Endothelial cell of umbilical vein (primary cell): ENCODE measurements at regions of chr13 and their contacts with region 1.

Region 1: DNA sequence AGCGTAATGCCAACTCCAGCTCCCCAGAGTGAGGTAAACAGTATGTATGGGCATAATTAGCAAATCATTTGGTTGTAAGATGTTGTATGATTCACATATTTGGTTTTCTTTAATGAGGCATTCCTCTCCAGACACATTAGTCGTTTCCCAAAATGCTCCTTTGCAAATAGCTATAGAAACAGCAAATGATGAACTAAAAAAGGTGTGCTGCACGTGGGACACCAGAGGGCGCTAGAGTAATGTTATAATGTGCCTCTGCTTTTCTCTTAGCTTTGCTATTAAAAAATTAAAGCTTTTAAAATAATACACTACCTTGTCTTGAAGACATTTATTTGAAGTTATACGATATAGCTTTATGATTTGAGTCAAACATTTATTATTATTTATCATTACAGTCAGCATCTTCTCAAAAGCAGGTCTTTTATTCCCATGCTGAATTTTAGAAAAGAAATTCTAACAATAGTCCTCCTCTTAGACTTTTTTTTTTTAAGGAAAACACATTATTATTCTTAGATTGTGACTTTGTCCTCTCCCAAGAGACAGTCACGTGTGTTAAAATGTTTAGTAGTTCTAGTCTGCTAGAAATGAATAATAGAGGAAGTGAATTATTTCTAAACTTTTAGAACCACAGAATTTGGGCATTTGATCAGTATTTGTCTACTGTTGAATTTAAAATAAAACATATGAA is 121.6 kb upstream of the FRY start:
- DNase-seq: peak; percentile 68
- H3K4me3 ChIP-seq: no peak overlapping the region
- H3K27ac ChIP-seq: no peak overlapping the region
- H3K4me1 ChIP-seq: no peaks in the 10 kb centered on the region
- H3K27me3 ChIP-seq: peaks cover 6 to 9% of the 10 kb centered on the region in 2 experiments
- CTCF ChIP-seq: peak; percentile 72 to 75
- POLR2A ChIP-seq: no peak

Region 2: DNA sequence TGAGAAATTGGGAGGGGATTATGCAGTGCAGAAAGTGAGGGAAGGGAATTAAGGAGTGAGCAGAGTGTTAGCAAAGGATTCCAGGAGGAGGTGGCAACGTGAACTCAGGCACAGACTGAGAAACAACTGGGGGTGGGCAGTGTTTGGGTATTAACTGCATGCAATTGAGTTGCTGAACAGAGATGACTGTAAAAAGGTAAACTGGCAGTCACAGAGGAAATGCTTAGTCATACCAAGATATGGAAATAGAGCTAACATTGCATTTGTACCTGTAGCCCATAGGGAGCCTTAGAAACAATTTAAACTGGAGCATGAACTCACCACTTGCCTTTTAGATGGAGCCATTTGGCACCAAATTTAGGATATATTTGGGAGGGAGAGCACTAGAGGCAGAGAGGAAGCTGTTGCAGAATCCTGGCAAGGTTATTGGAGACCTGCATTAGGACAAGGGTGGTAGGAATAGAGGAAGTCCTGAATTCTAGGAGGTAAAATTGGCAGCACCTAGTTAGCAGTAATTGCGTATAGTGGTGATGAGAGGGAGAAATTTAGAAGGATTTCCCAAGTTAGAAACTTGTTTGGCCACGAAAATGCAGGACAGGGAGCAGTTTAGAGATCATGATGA is 21.0 kb after region 1 on chr13:
- CTCF ChIA-PET with region 1: interaction called, 20 read pairs
- POLR2A ChIA-PET with region 1: no interaction called
- dilution Hi-C with region 1: no loop called
- intact Hi-C with region 1: no loop called
- DNase-seq: no peak
- H3K4me3 ChIP-seq: no peak overlapping the region
- H3K27ac ChIP-seq: no peak overlapping the region
- H3K4me1 ChIP-seq: no peaks in the 10 kb centered on the region
- H3K27me3 ChIP-seq: no peaks in the 10 kb centered on the region
- CTCF ChIP-seq: no peak
- POLR2A ChIP-seq: no peak

Region 3: DNA sequence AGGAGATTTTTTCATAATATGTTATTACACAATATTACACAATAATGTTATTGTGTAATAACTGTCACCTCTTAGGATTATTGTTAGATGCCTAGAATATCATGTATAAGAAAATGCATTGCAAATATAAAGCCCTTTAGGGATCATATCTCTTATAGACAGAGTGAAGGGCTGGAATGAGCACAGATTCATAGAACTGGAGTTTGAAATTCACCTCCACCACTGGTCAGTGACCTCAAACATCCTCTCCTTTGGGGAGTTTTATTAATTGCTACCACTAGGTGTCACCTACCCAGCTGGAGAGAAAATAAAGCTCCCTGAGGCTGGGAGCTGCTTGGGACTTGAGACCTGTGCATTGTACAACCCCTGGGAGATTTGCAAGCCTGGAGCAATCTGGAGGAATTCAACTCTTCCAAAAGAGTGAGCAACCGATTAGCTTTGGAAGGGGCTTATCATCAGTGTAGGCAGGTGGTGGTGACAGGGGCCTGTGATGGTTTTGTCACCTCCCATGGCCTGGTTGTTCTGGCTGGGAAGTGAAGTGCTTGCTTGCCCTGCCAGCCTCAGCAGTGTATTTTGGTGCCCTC is 91.3 kb after region 1 on chr13:
- CTCF ChIA-PET with region 1: interaction called, 18 read pairs
- POLR2A ChIA-PET with region 1: no interaction called
- dilution Hi-C with region 1: no loop called
- intact Hi-C with region 1: no loop called
- DNase-seq: peak; percentile 46
- H3K4me3 ChIP-seq: no peak overlapping the region
- H3K27ac ChIP-seq: no peak overlapping the region
- H3K4me1 ChIP-seq: no peaks in the 10 kb centered on the region
- H3K27me3 ChIP-seq: no peaks in the 10 kb centered on the region
- CTCF ChIP-seq: peak; percentile 50 to 57
- POLR2A ChIP-seq: no peak

Region 4: GRCh38 chr13:32246468-32246867 is 336.5 kb after region 1 on chr13:
- CTCF ChIA-PET with region 1: interaction called, 13 read pairs
- POLR2A ChIA-PET with region 1: no interaction called
- dilution Hi-C with region 1: no loop called
- intact Hi-C with region 1: no loop called
- DNase-seq: peak; percentile 82
- H3K4me3 ChIP-seq: no peak overlapping the region
- H3K27ac ChIP-seq: no peak overlapping the region
- H3K4me1 ChIP-seq: peaks cover 3% of the 10 kb centered on the region
- H3K27me3 ChIP-seq: no peaks in the 10 kb centered on the region
- CTCF ChIP-seq: peak; percentile 81 to 83
- POLR2A ChIP-seq: no peak

Region 5: GRCh38 chr13:32323912-32324311 is 413.9 kb after region 1 on chr13:
- CTCF ChIA-PET with region 1: no interaction called
- POLR2A ChIA-PET with region 1: no interaction called
- dilution Hi-C with region 1: no loop called
- intact Hi-C with region 1: no loop called
- DNase-seq: peak; percentile 43
- H3K4me3 ChIP-seq: no peak overlapping the region
- H3K27ac ChIP-seq: peak overlapping the region; percentile 21
- H3K4me1 ChIP-seq: no peaks in the 10 kb centered on the region
- H3K27me3 ChIP-seq: no peaks in the 10 kb centered on the region
- CTCF ChIP-seq: no peak
- POLR2A ChIP-seq: no peak

Region 6: GRCh38 chr13:32443111-32443510 is 533.1 kb after region 1 on chr13:
- CTCF ChIA-PET with region 1: interaction called, 13 read pairs
- POLR2A ChIA-PET with region 1: no interaction called
- dilution Hi-C with region 1: no loop called
- intact Hi-C with region 1: loop called (anchors 10 kb)
- DNase-seq: peak; percentile 43
- H3K4me3 ChIP-seq: no peak overlapping the region
- H3K27ac ChIP-seq: no peak overlapping the region
- H3K4me1 ChIP-seq: no peaks in the 10 kb centered on the region
- H3K27me3 ChIP-seq: no peaks in the 10 kb centered on the region
- CTCF ChIP-seq: peak in 1 of 2 donors; percentile 43
- POLR2A ChIP-seq: no peak

Region 7: DNA sequence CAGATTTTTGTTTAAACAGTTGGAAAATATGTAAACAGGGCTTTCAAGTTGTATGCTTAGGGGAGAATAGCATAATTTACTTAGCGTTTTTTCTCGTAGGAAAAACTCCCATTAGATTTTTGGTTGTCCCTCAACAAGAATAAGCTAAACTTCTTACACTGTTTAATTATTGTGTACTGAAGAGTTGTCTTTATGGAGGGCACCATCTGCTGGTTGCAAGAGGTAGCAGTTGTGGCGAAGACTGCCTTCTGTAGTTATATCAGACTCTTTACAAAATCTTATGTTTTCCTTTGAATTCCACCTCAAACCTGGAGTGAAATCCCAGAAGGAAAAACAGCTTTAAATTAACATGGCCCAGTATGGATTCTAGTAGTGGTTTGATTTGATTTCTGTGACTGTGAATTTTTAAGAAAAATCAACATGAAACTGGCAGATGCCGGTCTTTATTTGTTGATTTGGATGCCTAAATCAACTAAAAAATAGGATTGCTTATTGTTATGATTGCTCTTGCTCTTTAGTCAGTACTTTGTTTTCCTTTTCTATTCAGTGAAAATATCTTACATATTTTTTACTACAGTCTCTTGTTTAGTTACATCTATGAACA is 729.6 kb after region 1 on chr13:
- CTCF ChIA-PET with region 1: interaction called, 15 read pairs
- POLR2A ChIA-PET with region 1: no interaction called
- dilution Hi-C with region 1: no loop called
- intact Hi-C with region 1: no loop called
- DNase-seq: peak; percentile 67
- H3K4me3 ChIP-seq: no peak overlapping the region
- H3K27ac ChIP-seq: no peak overlapping the region
- H3K4me1 ChIP-seq: peaks cover 3% of the 10 kb centered on the region
- H3K27me3 ChIP-seq: no peaks in the 10 kb centered on the region
- CTCF ChIP-seq: peak; percentile 69 to 74
- POLR2A ChIP-seq: no peak